Adrenal gland (tissue), 19 donors: ENCODE measurements at regions of chr11 and their contacts with region 1.

Region 1: GRCh38 chr11:36564376-36565030 is 3.3 kb upstream of the RAG1 start:
- DNase-seq: peak; percentile 40 to 81 (median 56)
- H3K4me3 ChIP-seq: peak overlapping the region in 2 of 4 donors; percentile 18 to 52
- H3K27ac ChIP-seq: no peak overlapping the region
- H3K4me1 ChIP-seq: peaks cover 0 to 5% of the 10 kb centered on the region in 2 donors
- H3K27me3 ChIP-seq: no peaks in the 10 kb centered on the region
- CTCF ChIP-seq: peak; percentile 47 to 80 (median 67)
- POLR2A ChIP-seq: no peak

Region 2: DNA sequence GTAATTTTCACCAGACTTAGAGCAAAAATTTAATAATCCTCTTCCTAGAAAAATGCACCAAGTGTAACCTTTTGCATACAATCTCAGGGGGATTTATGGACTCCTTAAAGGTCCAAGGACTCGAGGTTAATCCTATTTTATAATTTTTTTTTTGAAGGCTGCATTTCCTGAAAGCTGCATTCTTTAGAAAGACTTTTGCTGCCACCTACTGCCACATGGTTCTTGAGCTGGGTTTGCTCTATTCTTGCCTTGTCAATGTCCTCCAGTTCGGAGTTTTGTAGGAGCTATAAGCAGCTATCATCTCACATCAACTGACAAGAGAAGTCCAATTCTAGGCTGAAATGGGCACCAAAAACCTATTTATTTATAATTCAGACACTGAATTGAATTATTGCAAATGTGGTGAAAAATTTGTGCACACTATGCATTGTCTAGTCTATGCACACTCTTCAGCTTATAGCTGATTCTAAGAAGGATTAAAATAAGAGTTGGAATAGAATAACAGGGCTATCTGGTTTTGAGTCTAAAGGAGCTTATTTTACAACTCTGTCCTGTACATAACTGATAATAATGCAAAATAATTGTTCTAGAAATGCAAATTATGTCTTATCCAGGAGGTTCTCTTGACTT is 85.7 kb before region 1 on chr11:
- intact Hi-C with region 1: no loop called
- DNase-seq: peak; percentile 36 to 75 (median 52)
- H3K4me3 ChIP-seq: no peak overlapping the region
- H3K27ac ChIP-seq: no peak overlapping the region
- H3K4me1 ChIP-seq: peaks cover 2 to 4% of the 10 kb centered on the region in 2 donors
- H3K27me3 ChIP-seq: no peaks in the 10 kb centered on the region
- CTCF ChIP-seq: peak; percentile 30 to 73 (median 62)
- POLR2A ChIP-seq: no peak

Region 3: DNA sequence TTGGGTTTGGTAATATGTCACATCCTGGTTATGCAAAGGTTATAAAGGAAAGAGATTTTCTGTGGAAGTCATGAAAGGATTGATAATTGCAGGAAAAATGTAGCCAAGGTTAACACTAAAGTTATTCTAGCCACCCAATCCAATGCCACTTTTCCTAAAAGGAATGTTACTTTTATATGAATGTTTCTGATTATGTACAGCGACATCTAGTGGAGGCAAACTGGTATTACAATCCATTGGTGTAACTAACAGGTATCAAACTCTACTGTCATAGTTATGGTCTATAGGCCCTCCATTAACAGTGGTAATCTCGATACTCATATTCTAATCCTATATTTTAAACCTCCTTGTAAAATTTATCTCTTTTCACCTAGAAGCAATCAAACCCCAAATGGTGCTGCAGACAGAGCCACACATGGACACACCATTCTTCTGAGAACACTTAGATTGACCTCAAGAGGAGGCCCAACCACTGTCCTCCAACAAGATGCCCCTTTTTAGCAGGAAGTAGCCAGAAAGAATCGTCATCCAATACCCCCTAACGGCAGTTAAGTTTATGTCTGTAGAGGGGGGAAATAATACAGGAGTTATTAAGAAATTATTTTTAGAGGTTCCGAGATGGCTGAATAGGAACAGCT is 108.4 kb after region 1 on chr11:
- intact Hi-C with region 1: loop called (anchors 5 kb)
- DNase-seq: peak in 5 of 7 donors; percentile 18 to 44 (median 22)
- H3K4me3 ChIP-seq: no peak overlapping the region
- H3K27ac ChIP-seq: no peak overlapping the region
- H3K4me1 ChIP-seq: no peaks in the 10 kb centered on the region
- H3K27me3 ChIP-seq: no peaks in the 10 kb centered on the region
- CTCF ChIP-seq: peak; percentile 72 to 87 (median 76)
- POLR2A ChIP-seq: no peak